Ovary (tissue), 10 donors: ENCODE measurements at regions of chr3 and their contacts with region 1.

Region 1: DNA sequence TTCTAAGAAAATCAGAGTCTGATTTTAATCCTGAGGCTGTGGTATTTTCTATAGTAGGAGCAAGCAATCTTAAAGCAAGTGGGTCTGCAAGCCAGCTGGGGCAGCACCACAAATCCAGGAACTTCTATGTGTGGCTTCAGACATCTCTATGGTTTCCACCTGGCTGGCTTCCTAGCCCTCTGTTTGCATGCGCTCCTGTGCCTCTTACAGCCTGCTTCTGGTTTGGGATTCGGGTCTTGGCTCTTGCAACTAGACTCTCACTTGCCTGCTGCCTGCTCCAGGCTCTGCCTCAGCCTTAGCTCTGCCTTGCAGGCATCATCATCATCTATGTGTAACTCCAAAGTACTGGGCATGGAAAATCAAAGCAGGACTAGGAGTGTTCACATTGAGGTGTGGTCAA is 43.4 kb downstream of the MINDY4B start:
- DNase-seq: no peak
- H3K4me3 ChIP-seq: no peak overlapping the region
- H3K27ac ChIP-seq: no peak overlapping the region
- H3K4me1 ChIP-seq: no peaks in the 10 kb centered on the region
- H3K27me3 ChIP-seq: no peaks in the 10 kb centered on the region
- CTCF ChIP-seq: no peak
- EP300 ChIP-seq: no peak
- POLR2A ChIP-seq: no peak

Region 2: GRCh38 chr3:150443331-150443741 is 418.5 kb before region 1 on chr3:
- intact Hi-C with region 1: no loop called
- DNase-seq: no peak
- H3K4me3 ChIP-seq: no peak overlapping the region
- H3K27ac ChIP-seq: no peak overlapping the region
- H3K4me1 ChIP-seq: no peaks in the 10 kb centered on the region
- H3K27me3 ChIP-seq: no peaks in the 10 kb centered on the region
- CTCF ChIP-seq: no peak
- EP300 ChIP-seq: no peak
- POLR2A ChIP-seq: no peak

Region 3: GRCh38 chr3:150787741-150788370 is 74.0 kb before region 1 on chr3:
- intact Hi-C with region 1: loop called in 2 of 4 experiments (anchors 5 kb)
- DNase-seq: peak; percentile 73 to 93 (median 84)
- H3K4me3 ChIP-seq: no peak overlapping the region
- H3K27ac ChIP-seq: no peak overlapping the region
- H3K4me1 ChIP-seq: no peaks in the 10 kb centered on the region
- H3K27me3 ChIP-seq: no peaks in the 10 kb centered on the region
- CTCF ChIP-seq: peak; percentile 33 to 72 (median 41)
- EP300 ChIP-seq: no peak
- POLR2A ChIP-seq: no peak

Region 4: DNA sequence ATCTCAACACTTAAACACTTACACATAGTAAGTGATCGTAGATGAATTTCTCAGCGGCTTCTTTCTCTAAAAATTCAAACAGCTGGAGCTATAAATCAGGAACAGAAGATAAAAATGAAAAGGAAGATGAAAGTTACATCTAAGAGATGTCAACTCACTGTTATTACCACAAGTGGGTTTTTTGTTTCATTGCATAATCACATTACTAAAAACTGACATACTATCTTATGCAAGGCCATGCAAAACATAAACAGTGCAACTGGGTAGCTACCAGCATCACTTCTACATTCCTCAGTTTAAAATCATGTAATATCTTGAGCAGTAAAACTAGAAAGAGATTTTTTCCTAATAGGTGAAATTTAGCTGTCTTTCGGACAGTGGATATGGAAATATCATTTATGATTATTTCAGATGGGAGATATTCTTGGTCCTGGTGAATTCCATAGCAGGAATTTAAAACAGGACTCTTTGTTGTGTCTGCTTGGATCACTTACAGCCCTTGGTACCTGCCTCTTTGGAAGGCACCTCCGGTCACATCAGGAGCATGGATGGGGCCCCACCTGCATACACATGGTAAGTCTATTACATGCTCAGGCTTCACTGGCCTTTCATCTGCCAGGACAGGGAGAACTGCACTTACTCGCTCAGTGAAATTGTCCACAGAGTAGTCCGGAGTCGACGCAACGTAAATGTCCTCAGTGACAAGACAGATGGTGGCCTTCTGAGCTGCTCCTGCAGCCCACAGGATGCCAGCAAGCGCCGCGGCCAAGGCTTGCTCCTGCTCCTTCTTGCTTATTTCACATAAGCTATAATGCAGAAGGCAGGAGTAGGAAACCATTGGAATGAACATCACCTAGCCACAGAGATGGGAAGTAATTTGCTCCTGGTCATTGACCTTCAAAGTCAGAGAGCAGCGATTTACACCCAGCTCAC is 28.7 kb after region 1 on chr3:
- intact Hi-C with region 1: no loop called
- DNase-seq: no peak
- H3K4me3 ChIP-seq: no peak overlapping the region
- H3K27ac ChIP-seq: no peak overlapping the region
- H3K4me1 ChIP-seq: no peaks in the 10 kb centered on the region
- H3K27me3 ChIP-seq: no peaks in the 10 kb centered on the region
- CTCF ChIP-seq: no peak
- EP300 ChIP-seq: no peak
- POLR2A ChIP-seq: no peak